Common myeloid progenitor, CD34-positive (primary cell): ENCODE measurements at regions of chr3 and their contacts with region 1.

Region 1: GRCh38 chr3:193686665-193687483 is 93.9 kb downstream of the OPA1 start:
- DNase-seq: peak in 1 of 3 donors; percentile 13
- H3K4me3 ChIP-seq: no peak overlapping the region
- H3K27ac ChIP-seq: no peak overlapping the region
- H3K4me1 ChIP-seq: peaks cover 0 to 15% (median 12%) of the 10 kb centered on the region in 4 experiments
- H3K27me3 ChIP-seq: no peaks in the 10 kb centered on the region

Region 2: DNA sequence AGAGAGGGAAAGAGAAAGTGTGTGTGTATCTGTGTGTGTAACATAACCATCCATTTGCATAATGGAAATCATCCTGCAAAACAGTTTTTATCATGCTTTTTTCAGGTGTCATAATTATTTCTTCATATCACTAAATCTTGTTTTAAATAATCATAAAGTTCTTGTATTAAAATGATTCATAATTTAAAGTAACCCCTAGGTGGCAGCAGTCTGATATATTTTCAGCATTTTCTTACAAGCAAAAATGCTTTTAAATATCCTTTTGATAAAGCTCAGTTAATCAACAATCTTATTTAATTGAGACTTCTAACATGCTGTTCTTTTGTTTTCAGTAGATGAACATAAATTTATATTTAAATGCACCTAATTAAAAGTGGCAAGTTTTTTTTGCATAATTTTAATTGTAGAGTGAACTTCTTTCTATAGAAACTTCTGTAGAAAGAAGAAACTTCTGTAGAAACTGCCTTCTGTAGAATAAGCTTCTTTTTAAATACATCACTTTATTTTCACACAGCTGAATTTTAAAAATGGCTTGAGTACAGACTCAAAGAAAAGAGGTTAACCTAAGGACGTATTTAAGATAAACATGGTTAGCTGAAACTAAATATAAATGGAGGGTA is 21.4 kb before region 1 on chr3:
- CTCF ChIA-PET with region 1: interaction called, 13 read pairs
- POLR2A ChIA-PET with region 1: no interaction called
- DNase-seq: peak; percentile 46 to 80 (median 77)
- H3K4me3 ChIP-seq: no peak overlapping the region
- H3K27ac ChIP-seq: no peak overlapping the region
- H3K4me1 ChIP-seq: peaks cover 0 to 9% (median 0%) of the 10 kb centered on the region in 4 experiments
- H3K27me3 ChIP-seq: no peaks in the 10 kb centered on the region